Activated CD4-positive, alpha-beta T cell treated with anti-CD3 and anti-CD28 coated beads for 36 hours (primary cell): ENCODE measurements at regions of chr7 and their contacts with region 1.

Region 1: DNA sequence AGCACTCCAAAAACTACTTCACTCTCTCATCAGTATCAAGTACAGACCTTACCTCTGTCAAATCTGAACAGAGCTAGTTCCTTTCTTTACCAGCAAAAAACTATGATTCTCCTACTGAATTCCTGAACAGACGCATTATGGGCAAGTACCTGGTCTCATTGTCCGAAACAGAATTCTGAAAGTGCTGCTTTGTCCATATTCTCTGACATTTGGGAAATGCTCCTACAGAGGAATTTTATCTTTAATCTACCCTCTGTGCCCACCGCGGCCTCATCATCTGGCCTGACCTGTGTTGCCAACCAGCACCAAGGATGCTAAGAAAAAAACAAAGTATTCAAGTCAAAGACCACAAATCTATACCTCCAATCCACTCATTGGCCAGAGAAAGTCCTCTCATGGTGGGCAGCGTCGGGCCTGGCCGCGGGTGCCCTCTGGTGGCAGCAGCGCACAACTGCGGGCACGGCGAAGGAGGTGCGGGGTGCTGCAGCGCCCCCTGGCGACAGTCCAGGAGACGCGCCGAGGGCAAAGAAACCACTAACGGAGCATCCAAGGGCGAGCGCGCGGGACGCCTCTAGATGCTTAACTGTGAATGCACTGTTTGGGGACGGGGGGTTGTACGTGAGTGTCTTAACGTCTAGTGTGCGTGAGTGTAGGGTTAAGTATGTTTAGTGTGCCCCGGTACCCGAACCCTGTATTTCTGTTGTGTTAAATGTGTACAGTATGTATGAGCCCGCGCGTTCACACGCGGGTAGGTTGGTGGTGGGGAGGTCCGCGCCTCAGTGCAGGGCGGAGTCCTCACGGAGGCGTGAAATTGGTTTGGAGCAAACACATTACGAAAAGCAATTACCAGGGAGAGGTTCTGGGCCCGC is 5.0 kb upstream of the GBX1 start:
- DNase-seq: peak; percentile 90
- ATAC-seq: peak; percentile 74
- H3K4me3 Mint-ChIP-seq: no peak overlapping the region
- H3K27ac Mint-ChIP-seq: no peak overlapping the region
- H3K4me1 Mint-ChIP-seq: peaks cover 8% of the 10 kb centered on the region
- H3K27me3 Mint-ChIP-seq: peaks cover 48% of the 10 kb centered on the region

Region 2: GRCh38 chr7:151123822-151124464 is 48.6 kb before region 1 on chr7:
- CTCF ChIA-PET with region 1: interaction called, 9 read pairs
- POLR2A ChIA-PET with region 1: no interaction called
- intact Hi-C with region 1: loop called (anchors 1 kb)
- DNase-seq: peak; percentile 91
- ATAC-seq: peak; percentile 99
- H3K4me3 Mint-ChIP-seq: no peak overlapping the region
- H3K27ac Mint-ChIP-seq: no peak overlapping the region
- H3K4me1 Mint-ChIP-seq: peaks cover 5% of the 10 kb centered on the region
- H3K27me3 Mint-ChIP-seq: no peaks in the 10 kb centered on the region

Region 3: GRCh38 chr7:151157645-151158329 is 14.7 kb before region 1 on chr7:
- CTCF ChIA-PET with region 1: interaction called, 17 read pairs
- POLR2A ChIA-PET with region 1: no interaction called
- intact Hi-C with region 1: no loop called
- DNase-seq: no peak
- ATAC-seq: no peak
- H3K4me3 Mint-ChIP-seq: no peak overlapping the region
- H3K27ac Mint-ChIP-seq: no peak overlapping the region
- H3K4me1 Mint-ChIP-seq: no peaks in the 10 kb centered on the region
- H3K27me3 Mint-ChIP-seq: peaks cover 21% of the 10 kb centered on the region

Region 4: DNA sequence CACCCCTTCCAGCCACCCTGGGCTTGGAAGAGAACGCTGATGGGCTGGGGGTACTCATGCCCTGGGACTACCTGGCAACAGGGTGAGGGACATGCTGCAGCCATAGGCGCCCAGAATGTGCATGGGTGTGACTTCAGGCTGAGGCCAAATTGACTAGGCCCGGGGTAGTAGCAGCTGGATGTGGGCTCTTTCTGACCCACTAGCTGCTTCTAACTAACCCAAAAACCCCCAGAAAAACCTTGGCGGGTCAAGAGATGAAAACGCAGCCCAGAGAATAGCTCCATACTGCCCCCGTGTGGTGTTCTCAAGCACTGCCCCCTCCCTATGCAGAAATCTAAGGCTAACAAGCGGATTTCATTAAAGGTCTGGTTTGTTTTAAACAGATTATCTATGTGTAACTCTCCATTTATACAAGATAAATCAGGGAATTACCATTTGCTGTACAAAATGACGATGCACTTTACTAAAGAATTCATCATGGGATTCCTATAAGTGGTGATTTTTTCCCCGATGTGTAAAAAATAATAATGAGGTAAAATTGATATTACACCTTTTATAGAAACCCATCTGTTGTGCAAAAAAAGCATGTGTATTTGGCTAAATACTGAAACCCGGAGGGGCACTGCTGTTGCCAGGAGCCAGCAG is 71.8 kb after region 1 on chr7:
- CTCF ChIA-PET with region 1: interaction called, 4 read pairs
- POLR2A ChIA-PET with region 1: no interaction called
- intact Hi-C with region 1: loop called in 1 of 2 experiments (anchors 1 kb)
- DNase-seq: peak; percentile 81
- ATAC-seq: peak; percentile 27
- H3K4me3 Mint-ChIP-seq: peak overlapping the region; percentile 58
- H3K27ac Mint-ChIP-seq: no peak overlapping the region
- H3K4me1 Mint-ChIP-seq: peaks cover 36% of the 10 kb centered on the region
- H3K27me3 Mint-ChIP-seq: peaks cover 23% of the 10 kb centered on the region

Region 5: GRCh38 chr7:151276666-151277590 is 104.4 kb after region 1 on chr7:
- CTCF ChIA-PET with region 1: no interaction called
- POLR2A ChIA-PET with region 1: no interaction called
- intact Hi-C with region 1: no loop called
- DNase-seq: peak; percentile 80
- ATAC-seq: peak; percentile 88
- H3K4me3 Mint-ChIP-seq: peak overlapping the region; percentile 63
- H3K27ac Mint-ChIP-seq: peak overlapping the region; percentile 77
- H3K4me1 Mint-ChIP-seq: peaks cover 19% of the 10 kb centered on the region
- H3K27me3 Mint-ChIP-seq: peaks cover 5% of the 10 kb centered on the region